Right ventricle myocardium inferior (tissue), 1 donor: ENCODE measurements at regions of chr10 and their contacts with region 1.

Region 1: GRCh38 chr10:119199231-119199992 is 8.0 kb upstream of the GRK5 start:
- DNase-seq: no peak
- ATAC-seq: peak; percentile 96

Region 2: DNA sequence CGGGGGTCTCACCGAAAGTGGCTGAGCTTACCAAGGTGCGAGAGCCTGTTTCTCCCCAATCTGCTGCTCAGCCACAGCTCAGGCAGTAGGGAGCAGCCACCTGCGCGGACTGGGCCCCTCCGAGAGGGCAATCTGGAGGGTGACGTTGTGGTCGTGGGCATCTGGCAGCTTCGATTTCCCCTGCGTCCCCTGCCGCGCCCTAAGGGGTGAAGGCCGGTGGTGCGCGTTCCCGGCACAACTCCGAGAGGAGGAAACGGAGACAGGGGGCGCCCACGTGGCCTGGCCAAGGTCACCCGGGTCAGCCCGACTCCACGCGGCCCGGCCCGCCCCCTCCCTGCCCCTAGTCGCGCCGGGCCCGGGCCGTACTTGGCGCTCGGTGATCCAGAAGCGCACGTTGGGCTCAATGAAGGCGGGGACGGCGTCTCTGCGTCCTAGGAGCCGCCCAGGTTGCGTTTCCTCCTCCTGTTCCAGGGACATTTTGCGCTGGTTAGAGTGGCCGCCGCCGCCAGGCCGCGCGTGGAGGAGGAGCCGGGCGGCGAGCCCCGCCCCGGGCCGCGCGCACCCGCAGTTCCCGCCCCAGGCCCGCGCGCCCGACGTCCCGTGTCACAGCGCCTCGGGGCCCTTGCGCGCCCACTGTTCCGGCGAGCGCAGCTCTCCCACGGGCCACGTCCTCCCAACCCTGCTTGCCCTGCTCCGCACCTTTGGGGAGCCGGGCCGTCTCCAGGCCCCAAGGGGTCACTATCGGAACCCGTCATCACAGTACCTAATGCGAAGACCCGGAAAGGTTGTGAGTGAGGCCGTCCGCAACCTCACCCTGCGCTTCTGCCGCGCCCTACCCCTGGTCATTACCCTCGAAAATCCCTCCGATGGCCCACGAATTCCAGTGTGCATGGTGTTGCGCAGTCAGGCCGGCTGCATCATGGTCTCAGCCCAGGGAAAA is 34.0 kb before region 1 on chr10 and contains the start of gene SFXN4:
- intact Hi-C with region 1: no loop called
- DNase-seq: peak; percentile 93
- ATAC-seq: peak; percentile 97
- total RNA-seq, gene SFXN4: 42.0 TPM

Region 3: GRCh38 chr10:119211625-119212441 is 12.4 kb after region 1 on chr10:
- intact Hi-C with region 1: no loop called
- DNase-seq: no peak
- ATAC-seq: no peak

Region 4: DNA sequence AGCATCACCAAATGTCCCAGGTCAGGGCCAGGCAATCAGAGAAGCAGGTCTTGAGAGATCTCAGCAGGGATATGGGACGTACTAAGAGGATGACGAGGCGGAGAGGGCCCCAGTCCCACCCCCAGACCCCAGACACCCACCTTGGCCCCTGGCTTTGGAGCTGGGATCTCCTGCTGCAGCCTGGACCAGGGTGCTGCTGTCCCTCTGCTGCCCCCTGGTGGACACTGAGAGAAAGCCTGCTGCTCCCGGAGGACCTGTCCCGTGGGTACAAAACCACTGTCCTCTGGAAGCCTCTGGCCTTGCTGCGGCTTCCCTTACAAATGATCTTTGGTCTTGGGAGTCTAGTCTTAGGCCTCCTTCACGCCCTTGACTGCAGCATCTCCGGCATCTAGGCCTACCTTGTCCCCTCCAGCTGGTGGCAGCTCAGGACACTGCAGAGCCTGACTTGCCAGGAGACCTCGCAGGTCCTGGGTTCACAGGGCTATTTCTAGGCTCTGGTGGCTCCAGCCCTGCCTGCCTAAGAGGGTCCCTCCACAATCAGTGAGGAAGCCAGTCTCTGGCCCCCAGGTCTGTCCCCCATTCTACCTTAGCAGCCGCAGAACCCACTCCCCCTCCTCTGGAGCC is 246.0 kb after region 1 on chr10:
- intact Hi-C with region 1: loop called (anchors 1 kb)
- DNase-seq: peak; percentile 89
- ATAC-seq: peak; percentile 48

Region 5: GRCh38 chr10:119489991-119490326 is 290.5 kb after region 1 on chr10:
- intact Hi-C with region 1: loop called (anchors 2 kb)
- DNase-seq: no peak
- ATAC-seq: no peak